ENCODE measurements at regions of chr10 and their contacts with region 1.

Region 1: DNA sequence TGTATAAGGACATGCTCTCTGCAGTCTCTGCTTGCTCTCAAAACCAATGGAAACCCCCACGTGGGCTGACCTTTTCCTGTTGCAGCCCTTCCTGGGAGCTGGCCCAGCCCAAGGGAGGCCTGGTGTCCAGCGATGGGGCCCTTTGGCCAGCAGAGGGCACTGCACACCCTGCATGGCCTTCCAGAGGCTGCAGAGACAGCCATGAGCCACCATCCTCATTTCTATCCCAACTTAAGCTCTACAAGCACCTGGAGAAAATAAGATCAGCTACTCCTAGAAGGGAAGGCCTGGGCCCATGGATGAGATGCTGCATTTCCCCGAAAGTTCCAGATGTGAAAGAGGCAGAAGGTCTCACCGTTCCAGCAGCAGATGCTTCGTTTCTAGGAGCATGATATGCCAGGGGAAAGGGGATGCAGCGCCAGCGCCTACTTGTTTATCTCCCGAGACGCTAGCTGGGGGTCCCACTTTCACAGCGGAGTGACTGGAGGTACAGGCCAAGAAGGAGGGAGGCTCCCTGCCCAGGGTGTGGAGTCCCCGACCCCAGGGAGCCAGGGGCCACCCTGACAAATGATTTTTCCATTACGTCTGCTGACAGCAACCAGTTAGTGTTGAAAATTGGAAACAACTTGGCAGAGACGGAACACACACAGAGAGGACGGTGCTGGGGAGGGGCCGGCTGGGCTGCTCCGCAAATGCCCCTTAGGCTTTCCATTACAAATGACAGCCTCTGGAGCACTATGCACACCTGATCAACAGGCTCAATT is 106.4 kb downstream of the ZRANB1 start:
- DNase-seq: peak; percentile 86 to 92
- ATAC-seq: peak; percentile 96 to 97
- H3K4me3 ChIP-seq: no peak overlapping the region
- H3K27ac ChIP-seq: peak overlapping the region; percentile 70 to 85
- H3K4me1 ChIP-seq: peaks cover 37% of the 10 kb centered on the region
- CTCF ChIP-seq: peak; percentile 94
- EP300 ChIP-seq: no peak
- POLR2A ChIP-seq: no peak
- RAD21 ChIP-seq: peak; percentile 87 to 88

Region 2: GRCh38 chr10:124992462-124993344 is 55.6 kb before region 1 on chr10:
- CTCF ChIA-PET with region 1: interaction called, 14 read pairs
- POLR2A ChIA-PET with region 1: no interaction called
- DNase-seq: peak in 1 of 2 experiments; percentile 70
- ATAC-seq: peak; percentile 45 to 82; a peak in 3 of 6 replicates
- H3K4me3 ChIP-seq: no peak overlapping the region
- H3K27ac ChIP-seq: no peak overlapping the region
- H3K4me1 ChIP-seq: no peaks in the 10 kb centered on the region
- CTCF ChIP-seq: peak; percentile 57
- EP300 ChIP-seq: no peak
- POLR2A ChIP-seq: no peak
- RAD21 ChIP-seq: peak; percentile 57 to 58

Region 3: GRCh38 chr10:125033146-125033924 is 14.9 kb before region 1 on chr10:
- CTCF ChIA-PET with region 1: interaction called, 39 read pairs
- POLR2A ChIA-PET with region 1: interaction called, 5 read pairs
- DNase-seq: no peak
- ATAC-seq: no peak
- H3K4me3 ChIP-seq: no peak overlapping the region
- H3K27ac ChIP-seq: no peak overlapping the region
- H3K4me1 ChIP-seq: peaks cover 53% of the 10 kb centered on the region
- CTCF ChIP-seq: no peak
- EP300 ChIP-seq: no peak
- POLR2A ChIP-seq: no peak
- RAD21 ChIP-seq: no peak

Region 4: DNA sequence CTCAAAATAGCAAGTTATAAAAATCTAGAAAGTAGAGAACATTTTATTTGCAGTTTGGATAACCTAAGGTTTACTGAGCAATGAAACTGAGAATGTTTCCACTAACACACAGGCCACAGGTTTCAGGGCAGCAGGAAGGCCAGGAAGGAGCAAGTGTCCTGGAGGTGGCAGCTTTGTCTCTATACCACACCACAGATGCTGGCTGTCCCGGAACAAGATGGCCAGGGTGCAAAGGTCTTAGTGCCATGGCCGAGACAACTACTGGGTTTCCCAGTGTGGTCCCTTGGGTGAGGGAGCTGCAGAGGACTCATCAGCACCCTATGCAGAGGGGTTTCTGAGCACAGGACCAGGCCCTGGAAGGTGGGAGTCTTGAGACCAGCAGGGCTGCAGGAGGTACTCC is 20.1 kb after region 1 on chr10:
- CTCF ChIA-PET with region 1: interaction called, 105 read pairs
- POLR2A ChIA-PET with region 1: no interaction called
- DNase-seq: no peak
- ATAC-seq: peak in 1 of 2 experiments; percentile 33; a peak in 3 of 6 replicates
- H3K4me3 ChIP-seq: no peak overlapping the region
- H3K27ac ChIP-seq: peak overlapping the region in 1 of 2 experiments; percentile 36; a peak in 1 of 6 replicates
- H3K4me1 ChIP-seq: 0 out of 3 replicates have a peak, but pooled peaks cover 5% of the 10 kb centered on the region
- CTCF ChIP-seq: no peak
- EP300 ChIP-seq: no peak
- POLR2A ChIP-seq: no peak
- RAD21 ChIP-seq: no peak

Region 5: DNA sequence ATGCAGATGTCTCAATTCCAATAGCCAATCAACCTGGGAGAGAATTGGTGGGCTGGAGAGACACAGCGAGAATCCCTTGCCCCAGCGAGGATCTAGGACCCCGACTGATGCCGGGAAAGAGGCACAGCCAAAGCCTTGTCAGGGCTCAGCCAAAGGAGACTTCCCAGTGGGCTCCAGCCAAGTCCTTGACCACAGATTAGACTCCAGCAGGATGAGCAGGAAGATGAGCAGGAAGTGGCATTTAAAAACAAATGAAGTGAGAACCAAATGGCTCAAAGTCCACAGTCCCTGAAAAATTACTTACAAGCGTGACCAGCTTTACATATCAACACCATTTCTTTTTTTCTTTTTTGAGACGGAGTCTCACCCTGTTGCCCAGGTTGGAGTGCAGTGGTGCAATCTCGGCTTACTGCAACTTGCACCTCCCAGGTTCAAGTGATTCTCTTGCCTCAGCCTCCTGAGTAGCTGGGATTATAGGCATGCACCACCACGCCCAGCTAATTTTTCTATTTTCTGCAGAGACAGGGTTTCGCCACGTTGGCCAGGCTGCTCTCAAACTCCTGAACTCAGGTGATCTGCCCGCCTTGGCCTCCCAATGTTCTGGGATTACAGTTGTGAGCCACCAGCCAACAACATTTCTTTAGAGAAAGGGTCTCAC is 71.9 kb after region 1 on chr10:
- CTCF ChIA-PET with region 1: interaction called, 10 read pairs
- POLR2A ChIA-PET with region 1: no interaction called
- DNase-seq: peak in 1 of 2 experiments; percentile 79
- ATAC-seq: peak in 1 of 2 experiments; percentile 31; a peak in 3 of 6 replicates
- H3K4me3 ChIP-seq: no peak overlapping the region
- H3K27ac ChIP-seq: peak overlapping the region; percentile 79 to 81
- H3K4me1 ChIP-seq: peaks cover 85% of the 10 kb centered on the region
- CTCF ChIP-seq: no peak
- EP300 ChIP-seq: no peak
- POLR2A ChIP-seq: no peak
- RAD21 ChIP-seq: no peak

Region 6: DNA sequence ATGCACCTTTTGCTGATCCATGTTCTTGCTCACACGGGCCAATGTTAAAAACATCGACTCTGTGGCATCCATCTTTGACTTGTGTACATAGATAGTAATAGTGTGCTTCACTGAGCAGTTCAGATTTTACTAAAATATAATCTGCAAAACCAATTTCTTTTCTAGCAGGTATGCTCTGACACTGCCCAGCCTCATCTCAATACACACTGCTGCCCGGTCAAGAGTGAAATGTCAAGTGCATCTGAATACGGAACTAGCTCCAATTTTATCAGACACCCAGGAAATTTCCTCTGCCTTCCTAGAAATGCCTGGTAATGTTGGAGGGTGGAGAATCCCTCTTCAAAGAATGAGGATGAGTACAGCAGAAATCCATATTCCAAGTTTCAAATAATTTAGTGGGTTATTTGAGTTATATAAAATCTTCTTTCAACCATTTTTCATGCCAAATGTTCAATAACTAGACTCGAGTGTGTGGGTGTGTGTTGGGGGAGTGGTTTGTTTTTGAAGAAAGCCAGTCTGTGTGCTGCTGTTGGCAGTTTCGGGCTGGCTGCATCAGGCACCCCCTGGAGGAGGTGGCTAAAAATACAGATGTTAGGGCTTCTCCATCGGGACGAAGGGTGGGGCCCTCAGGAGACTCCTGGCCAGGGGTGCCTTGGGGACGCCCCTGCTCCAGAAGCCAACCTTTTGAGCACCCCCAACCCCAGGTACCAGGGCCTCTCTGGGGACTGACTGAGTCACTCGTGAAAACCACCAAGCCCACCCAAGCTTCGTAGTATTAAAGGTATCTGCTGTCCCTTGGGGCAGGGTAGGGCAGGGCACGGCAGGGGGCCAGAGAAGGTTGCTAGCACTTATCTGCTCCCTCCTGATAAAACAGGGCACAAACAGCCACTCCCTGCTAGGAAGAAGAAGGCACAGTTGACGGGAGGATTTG is 96.7 kb after region 1 on chr10:
- CTCF ChIA-PET with region 1: interaction called, 12 read pairs
- POLR2A ChIA-PET with region 1: no interaction called
- DNase-seq: peak; percentile 67 to 78
- ATAC-seq: peak; percentile 70 to 83
- H3K4me3 ChIP-seq: no peak overlapping the region
- H3K27ac ChIP-seq: peak overlapping the region in 1 of 2 experiments; percentile 39; a peak in 1 of 6 replicates
- H3K4me1 ChIP-seq: peaks cover 52% of the 10 kb centered on the region
- CTCF ChIP-seq: peak; percentile 52
- EP300 ChIP-seq: no peak
- POLR2A ChIP-seq: no peak
- RAD21 ChIP-seq: peak; percentile 50 to 60

Measured in A549 (cell line).